ENCODE measurements at regions of chr5 and their contacts with region 1.

Region 1: DNA sequence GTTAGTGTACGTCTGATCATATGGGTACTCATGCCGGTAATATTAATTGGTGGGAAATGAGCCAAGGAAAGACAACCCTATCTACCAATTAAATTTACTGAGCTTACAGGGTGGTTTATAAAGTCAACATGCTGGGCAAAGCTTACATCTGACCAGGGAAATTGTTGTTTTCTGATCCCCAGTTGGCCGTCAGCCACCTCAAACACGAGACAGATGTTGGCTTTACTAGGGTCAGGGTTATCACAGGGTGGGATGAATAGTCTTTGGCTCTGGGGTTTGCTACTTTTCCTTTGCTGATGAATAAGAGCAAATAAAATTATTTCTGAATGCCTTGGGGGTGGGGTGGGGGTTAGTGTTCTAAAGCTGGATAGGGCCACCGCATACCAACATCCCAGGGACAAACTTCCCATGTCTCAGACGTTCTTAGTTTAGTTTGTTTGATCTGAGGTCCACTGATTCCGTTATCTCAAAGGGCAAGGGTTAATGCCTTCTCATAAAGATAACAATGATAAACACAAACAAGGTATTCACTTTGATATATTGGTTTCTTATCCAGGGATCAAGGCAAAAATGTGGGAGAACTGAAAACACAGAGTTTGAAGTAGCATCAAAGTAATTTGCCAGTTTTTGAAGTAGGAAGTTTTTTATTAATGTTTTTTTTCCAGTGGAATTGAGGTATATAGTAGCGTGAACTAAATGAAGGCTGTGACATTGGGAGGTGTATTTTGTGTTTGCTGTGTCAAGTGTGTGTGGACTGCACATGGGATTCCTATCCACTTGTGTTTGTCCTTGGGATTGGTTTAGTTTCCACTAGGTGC is 109.1 kb upstream of the RPS23 start:
- DNase-seq: peak; percentile 100
- ATAC-seq: peak; percentile 93
- H3K4me3 ChIP-seq: peak overlapping the region in 1 of 3 experiments; percentile 9; a peak in 1 of 6 replicates
- H3K27ac ChIP-seq: peak overlapping the region; percentile 72
- H3K4me1 ChIP-seq: peaks cover 68% of the 10 kb centered on the region
- H3K27me3 ChIP-seq: no peaks in the 10 kb centered on the region
- CTCF ChIP-seq: no peak
- EP300 ChIP-seq: peak; percentile 96 to 98
- POLR2A ChIP-seq: no peak
- RAD21 ChIP-seq: 0 out of 2 replicates have a peak, but pooled peaks have one; percentile 16

Region 2: GRCh38 chr5:82364497-82364896 is 22.7 kb before region 1 on chr5:
- CTCF ChIA-PET with region 1: no interaction called
- POLR2A ChIA-PET with region 1: interaction called, 52 read pairs
- in situ Hi-C with region 1: no loop called
- intact Hi-C with region 1: loop called (anchors 1 kb)
- DNase-seq: no peak
- ATAC-seq: peak; percentile 49; the same call in 2 of the 3 replicates
- H3K4me3 ChIP-seq: no peak overlapping the region
- H3K27ac ChIP-seq: peak overlapping the region; percentile 18
- H3K4me1 ChIP-seq: peaks cover 60% of the 10 kb centered on the region
- H3K27me3 ChIP-seq: no peaks in the 10 kb centered on the region
- CTCF ChIP-seq: peak; percentile 64
- EP300 ChIP-seq: no peak
- POLR2A ChIP-seq: no peak
- RAD21 ChIP-seq: no peak

Region 3: DNA sequence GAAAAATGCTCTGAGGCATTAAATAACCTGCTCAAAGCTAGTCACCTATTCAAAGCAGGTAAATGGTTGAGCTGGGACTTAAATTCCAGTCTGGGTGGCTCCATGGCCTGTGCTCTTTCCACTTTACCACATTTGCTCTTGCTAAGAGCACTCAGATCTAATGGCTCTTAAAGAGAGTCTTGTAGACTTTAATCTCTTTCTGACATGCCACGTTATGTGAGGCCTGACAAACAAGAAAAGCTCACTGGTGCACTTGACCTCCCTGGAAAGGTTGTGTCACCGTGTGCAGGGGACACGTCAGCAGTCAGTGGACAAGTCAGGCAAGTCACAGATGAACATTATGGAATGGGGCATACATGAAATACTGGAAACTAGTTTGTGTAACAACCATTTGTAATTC is 20.8 kb after region 1 on chr5:
- CTCF ChIA-PET with region 1: no interaction called
- POLR2A ChIA-PET with region 1: interaction called, 10 read pairs
- in situ Hi-C with region 1: no loop called
- intact Hi-C with region 1: no loop called
- DNase-seq: peak; percentile 44
- ATAC-seq: peak; percentile 50; the same call in 2 of the 3 replicates
- H3K4me3 ChIP-seq: no peak overlapping the region
- H3K27ac ChIP-seq: no peak overlapping the region
- H3K4me1 ChIP-seq: peaks cover 37% of the 10 kb centered on the region
- H3K27me3 ChIP-seq: no peaks in the 10 kb centered on the region
- CTCF ChIP-seq: no peak
- EP300 ChIP-seq: peak in 1 of 2 experiments; percentile 43; a peak in 1 of 4 replicates
- POLR2A ChIP-seq: no peak
- RAD21 ChIP-seq: no peak

Region 4: DNA sequence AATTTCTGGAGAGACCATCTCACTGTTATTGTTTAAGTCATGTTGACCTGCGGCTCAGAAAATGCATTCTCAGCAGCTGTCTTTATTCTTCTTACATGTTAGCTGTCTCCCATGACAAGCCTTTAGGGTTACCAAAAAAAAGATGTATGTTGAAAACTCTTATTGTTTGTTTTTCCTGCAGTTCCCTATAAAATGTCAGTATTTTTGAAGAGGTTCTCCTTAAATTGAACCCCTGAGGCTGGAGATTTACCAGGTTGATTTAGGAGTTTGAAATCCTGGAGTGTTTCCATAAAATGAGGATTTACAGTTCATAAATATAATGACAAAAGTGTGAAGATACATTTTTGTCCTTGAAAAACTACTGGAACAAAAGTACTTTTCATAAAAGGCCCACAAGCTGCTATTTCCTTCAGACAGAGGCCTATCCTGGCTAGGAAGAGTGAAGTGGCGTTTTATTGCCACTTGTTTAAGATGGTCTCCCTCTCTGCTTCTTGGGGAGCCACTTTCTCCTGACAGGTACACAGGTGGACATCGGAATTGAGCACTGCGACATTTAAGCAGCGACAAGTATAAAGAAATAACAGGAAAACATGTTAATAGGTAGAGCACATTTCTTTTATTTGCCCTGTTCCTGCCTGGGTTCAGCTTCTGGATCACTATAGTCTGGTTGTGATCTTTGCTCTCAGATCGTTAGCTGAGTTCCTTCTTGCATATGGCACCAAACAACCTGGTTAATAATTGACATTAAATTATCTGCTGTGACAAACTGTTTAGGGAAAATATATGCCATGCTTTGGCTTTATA is 235.7 kb after region 1 on chr5:
- CTCF ChIA-PET with region 1: no interaction called
- POLR2A ChIA-PET with region 1: interaction called, 18 read pairs
- in situ Hi-C with region 1: no loop called
- intact Hi-C with region 1: loop called (anchors 1 kb)
- DNase-seq: peak; percentile 87
- ATAC-seq: peak; percentile 99
- H3K4me3 ChIP-seq: peak overlapping the region in 1 of 3 experiments; percentile 27; a peak in 1 of 6 replicates
- H3K27ac ChIP-seq: peak overlapping the region; percentile 89
- H3K4me1 ChIP-seq: peaks cover 37% of the 10 kb centered on the region
- H3K27me3 ChIP-seq: no peaks in the 10 kb centered on the region
- CTCF ChIP-seq: no peak
- EP300 ChIP-seq: peak in 1 of 2 experiments; percentile 66; a peak in 2 of 4 replicates
- POLR2A ChIP-seq: 0 out of 4 replicates have a peak, but pooled peaks of 1 of the 2 experiments have one; percentile 35
- RAD21 ChIP-seq: no peak

Region 5: DNA sequence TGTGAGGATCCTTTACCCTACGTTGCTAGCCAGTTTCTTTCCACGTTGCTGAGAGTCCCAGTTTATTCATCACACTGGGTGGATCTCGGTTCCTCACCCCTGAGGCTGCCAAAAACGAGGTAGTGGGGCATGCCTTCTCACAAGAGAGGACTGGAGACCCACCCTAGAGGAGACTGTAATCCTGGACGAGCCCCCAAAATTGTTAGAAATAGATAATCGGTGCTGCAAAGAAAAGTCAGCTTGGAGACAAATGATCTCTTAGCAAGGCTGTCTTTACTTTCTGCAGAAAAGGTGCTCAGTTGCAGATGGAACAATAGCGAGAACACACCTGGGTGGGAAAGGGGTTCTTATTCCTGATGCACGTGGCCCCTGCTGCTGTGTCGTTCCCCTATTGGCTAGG is 588.2 kb after region 1 on chr5:
- CTCF ChIA-PET with region 1: no interaction called
- POLR2A ChIA-PET with region 1: no interaction called
- in situ Hi-C with region 1: no loop called
- intact Hi-C with region 1: loop called (anchors 2 kb)
- DNase-seq: no peak
- ATAC-seq: no peak
- H3K4me3 ChIP-seq: no peak overlapping the region
- H3K27ac ChIP-seq: no peak overlapping the region
- H3K4me1 ChIP-seq: peaks cover 57% of the 10 kb centered on the region
- H3K27me3 ChIP-seq: no peaks in the 10 kb centered on the region
- CTCF ChIP-seq: no peak
- EP300 ChIP-seq: no peak
- POLR2A ChIP-seq: no peak
- RAD21 ChIP-seq: no peak

Region 6: GRCh38 chr5:83577036-83577636 is 1189.9 kb after region 1 on chr5:
- CTCF ChIA-PET with region 1: no interaction called
- POLR2A ChIA-PET with region 1: no interaction called
- in situ Hi-C with region 1: no loop called
- intact Hi-C with region 1: loop called (anchors 2 kb)
- DNase-seq: peak; percentile 91
- ATAC-seq: peak; percentile 69
- H3K4me3 ChIP-seq: no peak overlapping the region; a peak in 1 of 6 replicates
- H3K27ac ChIP-seq: no peak overlapping the region
- H3K4me1 ChIP-seq: peaks cover 16% of the 10 kb centered on the region
- H3K27me3 ChIP-seq: peaks cover 0 to 4% of the 10 kb centered on the region in 2 experiments; a peak in 2 of 5 replicates
- CTCF ChIP-seq: no peak
- EP300 ChIP-seq: peak in 1 of 2 experiments; percentile 90; a peak in 2 of 4 replicates
- POLR2A ChIP-seq: no peak
- RAD21 ChIP-seq: no peak